ENCODE measurements at regions of chr7 and their contacts with region 1.

Region 1: GRCh38 chr7:143901668-143902331 is at the start of gene TCAF1:
- DNase-seq: peak; percentile 72 to 89 (median 84)
- ATAC-seq: peak; percentile 98
- H3K4me3 ChIP-seq: peak within 1 kb of the TSS; percentile 92
- H3K4me3 Mint-ChIP-seq: peak within 1 kb of the TSS; percentile 91 to 98 (median 96)
- H3K27ac ChIP-seq: peak within 1 kb of the TSS; percentile 82
- H3K27ac Mint-ChIP-seq: peak within 1 kb of the TSS; percentile 79 to 95 (median 89)
- H3K4me1 ChIP-seq: peaks cover 4 to 10% of the 10 kb centered on the region in 2 donors
- H3K4me1 Mint-ChIP-seq: peaks cover 10 to 54% (median 42%) of the 10 kb centered on the region in 7 donors
- H3K27me3 ChIP-seq: no peaks in the 10 kb centered on the region
- H3K27me3 Mint-ChIP-seq: no peaks in the 10 kb centered on the region
- total RNA-seq, gene TCAF1: 10.5 to 19.4 (median 13.8) TPM

Region 2: DNA sequence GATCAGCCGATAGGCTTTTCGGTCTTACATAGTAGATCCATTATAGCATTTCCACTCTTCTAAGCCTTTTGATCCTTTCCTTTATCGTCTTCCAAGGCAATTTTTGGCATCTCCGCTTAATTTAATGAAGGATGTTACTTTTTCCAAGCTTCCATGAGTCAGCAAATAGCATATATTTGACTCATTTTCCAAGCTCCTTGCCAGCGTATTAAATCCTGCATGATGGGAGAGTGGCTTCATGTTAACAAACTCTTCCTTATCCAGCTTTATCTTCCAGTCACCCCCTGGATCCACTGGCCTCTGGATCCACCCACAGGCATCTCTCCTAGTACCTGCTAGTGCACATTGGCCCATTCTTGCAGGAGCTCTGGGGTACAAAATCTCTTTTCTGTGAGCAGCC is 887.9 kb before region 1 on chr7:
- CTCF ChIA-PET with region 1: no interaction called
- POLR2A ChIA-PET with region 1: no interaction called
- intact Hi-C with region 1: no loop called
- DNase-seq: no peak
- ATAC-seq: no peak
- H3K4me3 ChIP-seq: no peak overlapping the region
- H3K4me3 Mint-ChIP-seq: no peak overlapping the region
- H3K27ac ChIP-seq: no peak overlapping the region
- H3K27ac Mint-ChIP-seq: no peak overlapping the region
- H3K4me1 ChIP-seq: no peaks in the 10 kb centered on the region
- H3K4me1 Mint-ChIP-seq: no peaks in the 10 kb centered on the region
- H3K27me3 ChIP-seq: no peaks in the 10 kb centered on the region
- H3K27me3 Mint-ChIP-seq: peaks cover 4 to 33% (median 17%) of the 10 kb centered on the region in 5 donors

Region 3: DNA sequence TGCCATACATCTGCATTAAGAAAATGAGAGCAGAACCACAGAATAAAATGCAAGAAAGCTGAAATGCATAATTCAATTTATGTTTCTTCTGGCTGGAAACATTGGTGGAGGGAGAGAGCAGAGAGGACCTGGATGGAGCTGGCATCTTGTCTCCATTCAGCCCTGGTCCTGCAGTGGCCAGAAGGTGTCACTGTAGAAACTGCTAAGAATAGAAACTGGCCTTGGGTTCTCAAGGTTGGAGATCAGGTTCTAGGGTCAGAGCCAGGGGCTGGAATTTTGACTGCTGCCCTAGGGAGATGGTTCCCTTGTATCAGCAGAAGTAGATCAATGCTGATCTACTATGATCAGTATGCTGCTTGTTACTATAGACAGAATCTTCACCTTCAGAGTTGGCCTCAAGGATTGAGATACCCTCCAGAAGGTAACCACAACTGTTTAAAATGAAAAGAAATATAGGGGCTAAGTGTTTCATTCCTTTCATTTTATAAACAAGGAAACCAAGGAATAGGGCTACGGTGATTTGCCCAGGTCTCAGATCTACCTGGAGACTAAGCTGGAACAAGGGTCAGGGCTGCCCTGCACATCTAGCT is 411.0 kb before region 1 on chr7:
- CTCF ChIA-PET with region 1: no interaction called
- POLR2A ChIA-PET with region 1: no interaction called
- intact Hi-C with region 1: loop called in 1 of 2 experiments (anchors 5 kb)
- DNase-seq: no peak
- ATAC-seq: no peak
- H3K4me3 ChIP-seq: no peak overlapping the region
- H3K4me3 Mint-ChIP-seq: no peak overlapping the region
- H3K27ac ChIP-seq: no peak overlapping the region
- H3K27ac Mint-ChIP-seq: peak overlapping the region in 1 of 9 donors; percentile 6
- H3K4me1 ChIP-seq: no peaks in the 10 kb centered on the region
- H3K4me1 Mint-ChIP-seq: peaks cover 8 to 31% (median 21%) of the 10 kb centered on the region in 7 donors
- H3K27me3 ChIP-seq: no peaks in the 10 kb centered on the region
- H3K27me3 Mint-ChIP-seq: peaks cover 0 to 2% (median 0%) of the 10 kb centered on the region in 5 donors

Region 4: DNA sequence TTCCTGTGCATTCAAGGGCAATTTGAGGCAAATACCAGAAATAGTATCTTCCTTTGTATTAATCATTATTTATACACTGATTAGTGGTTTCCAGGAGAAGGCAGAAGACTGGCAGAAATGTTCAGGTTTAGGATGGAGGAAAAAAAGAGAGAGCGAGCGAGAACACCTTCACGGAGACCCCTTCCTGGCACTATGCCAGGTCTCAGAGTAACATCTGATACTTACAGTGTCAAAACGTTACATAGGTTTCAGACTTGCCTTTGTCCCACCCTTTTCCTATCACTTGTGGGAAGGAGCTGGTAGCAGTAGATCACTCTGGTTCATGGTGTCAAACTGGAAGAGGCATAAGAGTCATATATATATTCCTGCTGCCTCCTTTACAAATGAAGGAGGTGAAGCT is 184.9 kb after region 1 on chr7:
- CTCF ChIA-PET with region 1: no interaction called
- POLR2A ChIA-PET with region 1: no interaction called
- intact Hi-C with region 1: no loop called
- DNase-seq: no peak
- ATAC-seq: no peak
- H3K4me3 ChIP-seq: no peak overlapping the region
- H3K4me3 Mint-ChIP-seq: no peak overlapping the region
- H3K27ac ChIP-seq: no peak overlapping the region
- H3K27ac Mint-ChIP-seq: no peak overlapping the region
- H3K4me1 ChIP-seq: no peaks in the 10 kb centered on the region
- H3K4me1 Mint-ChIP-seq: no peaks in the 10 kb centered on the region
- H3K27me3 ChIP-seq: no peaks in the 10 kb centered on the region
- H3K27me3 Mint-ChIP-seq: peaks cover 0 to 17% (median 0%) of the 10 kb centered on the region in 5 donors

Measured in naive thymus-derived CD4-positive, alpha-beta T cell (primary cell).